CD8-positive, alpha-beta memory T cell (primary cell): ENCODE measurements at regions of chr18 and their contacts with region 1.

Region 1: GRCh38 chr18:9136315-9137155 is at the start of gene ANKRD12:
- DNase-seq: peak; percentile 98 to 99 (median 98)
- H3K4me3 ChIP-seq: peak within 1 kb of the TSS; percentile 89
- H3K4me3 Mint-ChIP-seq: peak within 1 kb of the TSS; percentile 94 to 99 (median 99)
- H3K27ac ChIP-seq: peak within 1 kb of the TSS; percentile 97
- H3K27ac Mint-ChIP-seq: peak within 1 kb of the TSS; percentile 97 to 100 (median 100)
- H3K4me1 ChIP-seq: peaks cover 66% of the 10 kb centered on the region
- H3K4me1 Mint-ChIP-seq: peaks cover 67 to 75% (median 71%) of the 10 kb centered on the region in 3 donors
- H3K27me3 ChIP-seq: no peaks in the 10 kb centered on the region
- H3K27me3 Mint-ChIP-seq: peaks cover 0 to 2% of the 10 kb centered on the region in 2 donors
- total RNA-seq, gene ANKRD12: 66.6 to 67.6 TPM

Region 2: GRCh38 chr18:9102508-9103375 is 33.8 kb before region 1 on chr18 and contains the start of gene NDUFV2:
- CTCF ChIA-PET with region 1: interaction called, 40 read pairs
- POLR2A ChIA-PET with region 1: interaction called, 93 read pairs
- DNase-seq: peak; percentile 95 to 98 (median 97)
- H3K4me3 ChIP-seq: peak within 1 kb of the TSS; percentile 96
- H3K4me3 Mint-ChIP-seq: peak within 1 kb of the TSS; percentile 89 to 97 (median 95)
- H3K27ac ChIP-seq: peak within 1 kb of the TSS; percentile 89
- H3K27ac Mint-ChIP-seq: peak within 1 kb of the TSS; percentile 87 to 99 (median 96)
- H3K4me1 ChIP-seq: peaks cover 42% of the 10 kb centered on the region
- H3K4me1 Mint-ChIP-seq: peaks cover 56 to 60% (median 58%) of the 10 kb centered on the region in 3 donors
- H3K27me3 ChIP-seq: no peaks in the 10 kb centered on the region
- H3K27me3 Mint-ChIP-seq: no peaks in the 10 kb centered on the region
- total RNA-seq, gene NDUFV2: 324 to 331 TPM

Region 3: GRCh38 chr18:9117980-9118841 is 18.3 kb before region 1 on chr18:
- CTCF ChIA-PET with region 1: interaction called, 28 read pairs
- POLR2A ChIA-PET with region 1: interaction called, 167 read pairs
- DNase-seq: peak in 2 of 5 donors; percentile 37 to 43
- H3K4me3 ChIP-seq: peak overlapping the region; percentile 43
- H3K4me3 Mint-ChIP-seq: peak overlapping the region; percentile 82 to 94 (median 88)
- H3K27ac ChIP-seq: peak overlapping the region; percentile 76
- H3K27ac Mint-ChIP-seq: peak overlapping the region; percentile 91 to 99 (median 97)
- H3K4me1 ChIP-seq: peaks cover 82% of the 10 kb centered on the region
- H3K4me1 Mint-ChIP-seq: peaks cover 87 to 92% (median 91%) of the 10 kb centered on the region in 3 donors
- H3K27me3 ChIP-seq: no peaks in the 10 kb centered on the region
- H3K27me3 Mint-ChIP-seq: no peaks in the 10 kb centered on the region

Region 4: GRCh38 chr18:9126337-9126736 is 10.2 kb before region 1 on chr18:
- CTCF ChIA-PET with region 1: interaction called, 22 read pairs
- POLR2A ChIA-PET with region 1: interaction called, 167 read pairs
- DNase-seq: no peak
- H3K4me3 ChIP-seq: no peak overlapping the region
- H3K4me3 Mint-ChIP-seq: no peak overlapping the region
- H3K27ac ChIP-seq: no peak overlapping the region
- H3K27ac Mint-ChIP-seq: peak overlapping the region in 2 of 8 donors; percentile 17 to 56
- H3K4me1 ChIP-seq: peaks cover 40% of the 10 kb centered on the region
- H3K4me1 Mint-ChIP-seq: peaks cover 46 to 71% (median 62%) of the 10 kb centered on the region in 3 donors
- H3K27me3 ChIP-seq: no peaks in the 10 kb centered on the region
- H3K27me3 Mint-ChIP-seq: no peaks in the 10 kb centered on the region

Region 5: DNA sequence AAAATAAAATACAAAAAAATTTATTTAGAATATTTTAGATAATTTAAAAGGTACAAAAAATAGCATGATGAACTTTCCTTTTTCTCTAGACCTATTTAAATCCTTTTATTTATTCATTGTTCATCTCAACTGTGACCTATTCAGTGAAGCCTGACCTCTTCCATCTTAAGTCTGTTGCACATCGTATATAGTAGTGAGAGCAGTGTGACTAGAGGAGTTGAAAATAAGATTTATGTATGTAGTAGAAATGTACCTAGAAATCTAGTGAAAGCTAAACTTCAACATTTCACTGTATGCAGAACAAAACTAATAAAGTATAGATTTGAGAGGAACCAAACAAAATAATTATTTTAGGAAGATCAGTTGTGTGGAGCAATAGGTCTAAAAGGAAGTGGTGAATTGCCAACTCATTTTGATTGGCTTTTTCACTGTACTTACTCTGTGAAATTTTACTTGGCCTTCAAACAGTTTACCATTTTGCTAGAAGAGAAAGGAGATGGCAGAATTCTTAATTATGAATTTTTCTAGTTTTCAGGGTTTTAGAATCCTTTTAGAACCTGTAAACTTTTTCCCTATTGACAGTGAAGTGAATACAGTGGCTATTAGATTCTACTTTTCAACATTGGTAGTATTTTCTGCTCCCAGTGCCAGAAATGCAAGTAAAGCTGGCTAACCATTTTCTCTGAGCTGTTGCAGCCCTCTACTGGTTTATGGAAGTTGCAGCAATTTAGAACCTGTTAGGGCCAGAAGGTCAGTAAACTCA is 11.1 kb after region 1 on chr18:
- CTCF ChIA-PET with region 1: interaction called, 10 read pairs
- POLR2A ChIA-PET with region 1: interaction called, 6 read pairs
- DNase-seq: peak in 4 of 5 donors; percentile 17 to 56 (median 54)
- H3K4me3 ChIP-seq: no peak overlapping the region
- H3K4me3 Mint-ChIP-seq: peak overlapping the region in 5 of 7 donors; percentile 7 to 37 (median 9)
- H3K27ac ChIP-seq: peak overlapping the region; percentile 13
- H3K27ac Mint-ChIP-seq: peak overlapping the region; percentile 44 to 97 (median 68)
- H3K4me1 ChIP-seq: peaks cover 78% of the 10 kb centered on the region
- H3K4me1 Mint-ChIP-seq: peaks cover 74 to 91% (median 89%) of the 10 kb centered on the region in 3 donors
- H3K27me3 ChIP-seq: no peaks in the 10 kb centered on the region
- H3K27me3 Mint-ChIP-seq: no peaks in the 10 kb centered on the region

Region 6: DNA sequence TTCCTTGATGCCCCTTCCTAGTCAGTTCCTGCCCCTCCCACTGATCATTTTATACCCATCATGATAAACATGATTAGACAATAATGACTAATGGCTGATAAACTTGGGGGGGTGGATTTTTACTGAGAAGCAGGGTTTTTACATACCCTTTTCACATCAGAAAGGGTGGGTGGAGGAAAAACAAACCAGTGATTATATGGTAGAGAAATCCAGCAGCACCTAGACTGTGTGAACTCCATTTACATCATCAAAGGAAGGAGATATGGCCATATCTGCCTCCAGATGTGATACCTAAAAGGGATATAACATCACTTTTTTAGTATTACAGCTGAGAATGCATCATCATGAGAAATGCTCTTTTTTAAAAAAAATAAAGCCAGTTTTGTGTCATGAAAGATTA is 89.9 kb after region 1 on chr18:
- CTCF ChIA-PET with region 1: no interaction called
- POLR2A ChIA-PET with region 1: no interaction called
- DNase-seq: no peak
- H3K4me3 ChIP-seq: no peak overlapping the region
- H3K4me3 Mint-ChIP-seq: no peak overlapping the region
- H3K27ac ChIP-seq: no peak overlapping the region
- H3K27ac Mint-ChIP-seq: peak overlapping the region in 2 of 8 donors; percentile 33 to 66
- H3K4me1 ChIP-seq: no peaks in the 10 kb centered on the region
- H3K4me1 Mint-ChIP-seq: peaks cover 41 to 52% (median 51%) of the 10 kb centered on the region in 3 donors
- H3K27me3 ChIP-seq: no peaks in the 10 kb centered on the region
- H3K27me3 Mint-ChIP-seq: no peaks in the 10 kb centered on the region

Region 7: DNA sequence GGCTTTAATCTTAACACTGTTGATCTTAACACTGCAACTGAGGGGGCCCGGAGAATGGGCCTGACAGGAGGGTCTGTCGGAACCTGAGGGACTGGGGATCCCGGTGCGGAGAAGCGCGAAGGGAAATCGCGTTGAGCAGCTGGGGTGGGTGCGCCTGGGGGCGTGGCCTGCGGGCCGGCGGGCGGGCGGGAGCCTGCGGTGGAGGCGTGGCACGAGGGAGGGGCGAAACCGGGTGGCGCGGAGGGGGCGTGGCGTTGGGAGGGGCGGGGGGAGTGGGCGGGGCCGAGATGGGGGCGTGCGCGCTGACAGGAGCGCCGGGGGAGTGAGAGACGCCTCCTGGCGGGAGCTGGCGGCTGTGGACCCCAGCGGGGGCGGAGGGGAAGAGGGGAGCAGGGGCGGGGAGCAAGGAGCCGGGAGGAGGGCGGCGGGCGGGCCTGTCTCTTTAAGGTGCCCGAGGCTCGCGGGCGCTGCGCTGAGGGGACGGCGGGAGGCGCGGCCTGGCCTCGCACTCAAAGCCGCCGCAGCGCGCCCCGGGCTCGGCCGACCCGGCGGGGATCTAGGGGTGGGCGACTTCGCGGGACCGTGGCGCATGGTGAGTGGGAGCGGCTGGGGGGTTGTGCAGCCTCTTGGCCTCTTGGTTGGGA is 197.9 kb after region 1 on chr18 and contains the start of gene TWSG1:
- CTCF ChIA-PET with region 1: interaction called, 3 read pairs
- POLR2A ChIA-PET with region 1: interaction called, 19 read pairs
- DNase-seq: peak; percentile 92 to 96 (median 94)
- H3K4me3 ChIP-seq: peak within 1 kb of the TSS; percentile 92
- H3K4me3 Mint-ChIP-seq: peak within 1 kb of the TSS; percentile 82 to 94 (median 91)
- H3K27ac ChIP-seq: peak within 1 kb of the TSS; percentile 79
- H3K27ac Mint-ChIP-seq: peak within 1 kb of the TSS; percentile 55 to 95 (median 86)
- H3K4me1 ChIP-seq: peaks cover 6% of the 10 kb centered on the region
- H3K4me1 Mint-ChIP-seq: peaks cover 19 to 34% (median 31%) of the 10 kb centered on the region in 3 donors
- H3K27me3 ChIP-seq: no peaks in the 10 kb centered on the region
- H3K27me3 Mint-ChIP-seq: no peaks in the 10 kb centered on the region
- total RNA-seq, gene TWSG1: 13.1 to 14.2 TPM